WTC11 (cell line): ENCODE measurements at regions of chr12 and their contacts with region 1.

Region 1: GRCh38 chr12:54251667-54252284 is 28.1 kb downstream of the CBX5 start:
- DNase-seq: no peak
- ATAC-seq: peak; percentile 72; the same call in 1 of the 2 replicates
- H3K4me3 Mint-ChIP-seq: no peak overlapping the region
- H3K27ac Mint-ChIP-seq: no peak overlapping the region
- H3K4me1 Mint-ChIP-seq: no peaks in the 10 kb centered on the region; the same call in 1 of the 2 replicates
- H3K27me3 Mint-ChIP-seq: no peaks in the 10 kb centered on the region
- CTCF ChIP-seq: no peak

Region 2: GRCh38 chr12:54220092-54220557 is 31.7 kb before region 1 on chr12:
- CTCF ChIA-PET with region 1: interaction called, 12 read pairs
- POLR2A ChIA-PET with region 1: no interaction called
- DNase-seq: peak; percentile 86
- ATAC-seq: peak; percentile 64
- H3K4me3 Mint-ChIP-seq: no peak overlapping the region
- H3K27ac Mint-ChIP-seq: no peak overlapping the region
- H3K4me1 Mint-ChIP-seq: peaks cover 31% of the 10 kb centered on the region
- H3K27me3 Mint-ChIP-seq: peaks cover 39% of the 10 kb centered on the region
- CTCF ChIP-seq: peak; percentile 73

Region 3: GRCh38 chr12:54229624-54230212 is 22.1 kb before region 1 on chr12:
- CTCF ChIA-PET with region 1: interaction called, 10 read pairs
- POLR2A ChIA-PET with region 1: no interaction called
- DNase-seq: no peak
- ATAC-seq: no peak
- H3K4me3 Mint-ChIP-seq: no peak overlapping the region
- H3K27ac Mint-ChIP-seq: peak overlapping the region; percentile 62
- H3K4me1 Mint-ChIP-seq: peaks cover 11% of the 10 kb centered on the region
- H3K27me3 Mint-ChIP-seq: no peaks in the 10 kb centered on the region
- CTCF ChIP-seq: no peak

Region 4: DNA sequence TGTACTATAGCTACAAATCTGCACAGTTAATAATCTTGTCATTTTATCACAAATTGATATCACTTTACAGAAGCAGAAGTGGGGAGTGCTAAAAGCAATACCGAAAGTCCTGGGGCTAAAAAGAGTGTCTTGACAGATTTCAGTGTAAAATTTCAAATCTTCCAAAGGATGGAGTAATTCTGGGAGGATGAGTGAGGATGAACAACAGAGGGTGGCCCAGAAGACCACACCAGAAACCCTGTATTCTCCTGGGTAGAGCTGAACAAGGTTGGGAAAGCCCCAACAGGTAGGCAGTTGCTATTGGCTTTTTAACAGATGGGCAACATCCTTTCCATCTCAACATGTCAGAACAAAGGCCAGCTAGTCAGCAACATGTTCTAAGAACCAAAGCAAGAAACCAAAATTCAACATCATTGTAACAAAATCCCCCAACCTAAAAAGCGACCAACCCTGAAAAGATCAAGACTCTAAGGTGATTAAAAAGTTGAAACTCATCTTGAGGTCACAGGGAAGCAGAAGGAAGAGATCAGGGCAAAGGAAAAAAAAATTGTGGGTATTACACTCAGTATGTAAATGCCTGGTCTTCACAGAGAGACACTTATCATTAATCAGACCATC is 10.7 kb before region 1 on chr12:
- CTCF ChIA-PET with region 1: interaction called, 12 read pairs
- POLR2A ChIA-PET with region 1: no interaction called
- DNase-seq: no peak
- ATAC-seq: no peak
- H3K4me3 Mint-ChIP-seq: no peak overlapping the region
- H3K27ac Mint-ChIP-seq: peak overlapping the region; percentile 64
- H3K4me1 Mint-ChIP-seq: no peaks in the 10 kb centered on the region
- H3K27me3 Mint-ChIP-seq: no peaks in the 10 kb centered on the region
- CTCF ChIP-seq: no peak

Region 5: GRCh38 chr12:54279866-54280467 is 28.2 kb after region 1 on chr12 and contains the start of gene CBX5:
- CTCF ChIA-PET with region 1: interaction called, 21 read pairs
- POLR2A ChIA-PET with region 1: interaction called, 19 read pairs
- DNase-seq: peak; percentile 99
- ATAC-seq: peak; percentile 53
- H3K4me3 Mint-ChIP-seq: no peak within 1 kb of the TSS
- H3K27ac Mint-ChIP-seq: no peak within 1 kb of the TSS
- H3K4me1 Mint-ChIP-seq: peaks cover 58% of the 10 kb centered on the region
- H3K27me3 Mint-ChIP-seq: no peaks in the 10 kb centered on the region
- CTCF ChIP-seq: no peak
- total RNA-seq, gene CBX5: 182 to 218 TPM (median 216 TPM) in 3 replicates

Region 6: DNA sequence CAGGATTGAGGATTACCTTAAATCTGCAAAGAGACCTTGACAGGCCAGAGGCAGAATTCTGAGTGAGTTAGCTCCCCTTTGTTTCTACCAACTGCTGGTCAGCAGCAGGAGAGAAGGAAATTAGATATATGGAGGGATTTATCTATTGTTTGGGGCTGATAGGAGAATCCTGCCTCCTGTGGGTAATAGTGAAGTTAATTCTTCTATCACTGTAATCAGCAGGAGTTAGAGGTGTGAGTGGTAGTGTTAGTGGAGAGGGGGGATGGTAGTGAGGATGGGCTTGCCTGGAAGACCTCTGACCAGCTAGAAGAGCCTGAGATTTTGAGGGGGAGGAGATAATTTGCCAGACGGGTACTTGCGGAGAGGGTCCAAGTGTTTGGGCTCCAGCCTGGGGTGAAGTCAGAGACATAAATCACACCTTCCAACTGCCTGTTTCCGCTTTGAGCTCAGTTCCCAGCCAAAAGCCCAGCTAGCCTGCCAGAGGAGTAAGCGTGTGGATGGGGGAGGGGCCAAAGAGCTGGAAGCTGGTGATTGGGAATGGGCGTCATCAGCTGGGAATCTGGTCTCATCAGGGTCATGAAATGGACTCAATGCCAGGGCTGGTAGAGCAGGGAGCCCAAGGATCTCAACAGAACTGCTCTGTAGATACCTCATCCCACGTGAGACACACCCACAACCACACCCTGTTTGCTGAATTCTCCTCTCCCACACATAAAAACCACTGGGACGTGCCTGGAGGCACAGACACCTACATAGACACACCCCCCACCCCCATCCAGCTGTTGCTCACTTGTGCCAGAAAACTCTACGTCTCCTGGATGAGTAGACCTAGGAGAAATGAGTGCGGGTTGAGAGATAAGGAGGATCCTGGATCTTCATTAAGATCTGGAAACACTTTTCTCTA is 180.4 kb after region 1 on chr12:
- CTCF ChIA-PET with region 1: no interaction called
- POLR2A ChIA-PET with region 1: no interaction called
- DNase-seq: peak; percentile 60
- ATAC-seq: peak; percentile 63
- H3K4me3 Mint-ChIP-seq: peak overlapping the region; percentile 5; the same call in 1 of the 2 replicates
- H3K27ac Mint-ChIP-seq: no peak overlapping the region
- H3K4me1 Mint-ChIP-seq: peaks cover 43% of the 10 kb centered on the region
- H3K27me3 Mint-ChIP-seq: peaks cover 94% of the 10 kb centered on the region
- CTCF ChIP-seq: no peak

Region 7: DNA sequence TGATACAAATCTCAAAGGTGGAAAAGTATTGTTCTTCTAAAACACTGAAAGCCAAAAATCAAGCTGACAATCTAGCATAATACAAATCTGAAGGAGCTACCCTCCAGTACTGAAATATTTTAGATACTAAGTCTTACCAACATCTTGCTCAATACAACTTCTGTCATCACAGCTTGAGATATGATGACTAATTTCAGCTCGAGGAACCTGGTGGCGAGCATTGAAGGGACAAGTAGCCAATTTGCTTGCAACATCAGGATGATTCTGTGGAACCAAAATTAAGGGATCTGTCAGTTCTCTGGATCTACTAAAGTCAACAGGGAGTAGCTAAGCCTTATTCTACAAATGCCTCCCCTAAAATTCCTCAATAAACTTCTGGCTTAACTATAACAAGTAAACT is 211.3 kb after region 1 on chr12:
- CTCF ChIA-PET with region 1: no interaction called
- POLR2A ChIA-PET with region 1: no interaction called
- DNase-seq: no peak
- ATAC-seq: no peak
- H3K4me3 Mint-ChIP-seq: no peak overlapping the region
- H3K27ac Mint-ChIP-seq: no peak overlapping the region
- H3K4me1 Mint-ChIP-seq: no peaks in the 10 kb centered on the region
- H3K27me3 Mint-ChIP-seq: peaks cover 81% of the 10 kb centered on the region
- CTCF ChIP-seq: no peak